Activated naive CD4-positive, alpha-beta T cell treated with anti-CD3 and anti-CD28 coated beads for 36 hours (primary cell): ENCODE measurements at regions of chr12 and their contacts with region 1.

Region 1: DNA sequence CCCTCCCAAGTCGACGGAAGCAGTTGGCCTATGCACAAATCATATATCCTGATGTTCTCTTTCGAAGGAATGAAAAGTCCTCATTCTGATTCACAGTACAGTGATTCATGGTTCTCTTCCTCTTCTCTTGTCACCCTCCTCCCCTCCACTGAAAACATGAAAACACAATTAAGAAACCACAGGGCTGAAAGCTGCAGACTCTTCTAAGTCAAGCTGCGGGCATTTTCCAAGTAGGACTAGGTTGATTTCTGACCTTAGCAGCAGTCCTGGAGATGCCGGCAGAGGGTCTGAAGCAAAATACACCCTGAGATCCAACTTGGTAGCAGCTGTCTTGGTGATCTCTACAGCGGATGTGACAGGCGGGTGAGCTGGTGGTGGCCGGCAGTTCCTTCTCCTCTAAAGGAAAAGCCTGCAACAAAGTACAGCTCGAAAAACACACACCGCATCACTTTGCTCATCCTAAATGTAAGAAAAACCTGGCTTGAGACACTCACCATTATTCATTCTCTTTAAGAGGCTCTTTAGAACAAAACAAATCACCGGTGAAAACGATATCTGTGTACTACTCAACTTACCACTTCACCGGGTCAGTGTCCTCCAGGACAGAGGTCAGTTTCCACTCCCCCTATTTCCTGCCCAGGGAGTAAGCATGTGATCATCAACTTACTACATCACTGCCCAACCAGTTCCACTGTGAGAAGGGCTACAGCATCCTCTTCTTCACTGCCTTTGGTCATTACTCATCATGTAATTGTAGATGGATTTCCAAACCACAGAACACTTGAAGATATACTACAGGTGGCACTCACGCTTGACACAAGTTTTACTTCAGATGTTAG is 6.0 kb downstream of the TMCC3 start:
- DNase-seq: peak; percentile 18
- H3K4me3 Mint-ChIP-seq: peak overlapping the region; percentile 8
- H3K27ac Mint-ChIP-seq: no peak overlapping the region
- H3K4me1 Mint-ChIP-seq: peaks cover 27% of the 10 kb centered on the region
- H3K27me3 Mint-ChIP-seq: peaks cover 50% of the 10 kb centered on the region

Region 2: GRCh38 chr12:94262228-94263010 is 381.9 kb before region 1 on chr12:
- CTCF ChIA-PET with region 1: no interaction called
- intact Hi-C with region 1: loop called (anchors 5 kb)
- DNase-seq: peak; percentile 83
- H3K4me3 Mint-ChIP-seq: peak overlapping the region; percentile 89
- H3K27ac Mint-ChIP-seq: peak overlapping the region; percentile 96
- H3K4me1 Mint-ChIP-seq: peaks cover 31% of the 10 kb centered on the region
- H3K27me3 Mint-ChIP-seq: no peaks in the 10 kb centered on the region

Region 3: GRCh38 chr12:94621664-94622359 is 22.5 kb before region 1 on chr12:
- CTCF ChIA-PET with region 1: interaction called, 3 read pairs
- intact Hi-C with region 1: loop called (anchors 1 kb)
- DNase-seq: peak; percentile 66
- H3K4me3 Mint-ChIP-seq: no peak overlapping the region
- H3K27ac Mint-ChIP-seq: no peak overlapping the region
- H3K4me1 Mint-ChIP-seq: peaks cover 20% of the 10 kb centered on the region
- H3K27me3 Mint-ChIP-seq: no peaks in the 10 kb centered on the region

Region 4: DNA sequence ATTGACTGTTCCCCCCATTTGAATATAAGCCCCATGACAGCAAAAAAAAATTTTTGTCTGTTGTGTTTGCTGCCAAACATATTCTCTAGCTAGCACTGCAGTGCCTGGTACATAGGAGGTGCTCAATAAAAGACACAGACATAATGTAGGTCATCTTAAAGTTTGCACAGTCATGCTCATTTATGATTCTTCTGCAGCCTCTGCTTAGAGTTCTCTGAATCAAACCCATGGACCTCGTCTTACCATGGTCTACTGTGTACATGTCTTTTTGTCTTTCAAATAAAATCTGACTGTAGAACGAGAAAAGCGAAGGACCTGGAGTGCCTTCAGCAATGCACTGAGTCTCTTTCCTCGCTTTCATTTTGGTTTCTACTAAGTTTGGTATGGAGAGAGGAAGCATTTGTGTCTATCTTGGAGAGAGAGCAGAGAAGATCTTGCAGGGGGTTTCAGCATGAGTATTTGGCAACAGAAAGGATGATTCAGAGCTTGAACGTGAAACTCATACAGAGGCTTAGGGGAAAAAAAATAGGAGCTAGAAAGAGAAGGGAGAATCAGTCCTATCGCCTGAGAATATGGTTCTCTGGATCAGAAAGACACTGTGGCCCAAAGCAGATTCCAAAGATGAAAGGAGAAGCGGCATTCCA is 44.8 kb after region 1 on chr12:
- CTCF ChIA-PET with region 1: no interaction called
- intact Hi-C with region 1: loop called (anchors 2 kb)
- DNase-seq: no peak
- H3K4me3 Mint-ChIP-seq: no peak overlapping the region
- H3K27ac Mint-ChIP-seq: no peak overlapping the region
- H3K4me1 Mint-ChIP-seq: peaks cover 6% of the 10 kb centered on the region
- H3K27me3 Mint-ChIP-seq: no peaks in the 10 kb centered on the region